Esophagus muscularis mucosa (tissue), 4 donors: ENCODE measurements at regions of chr2 and their contacts with region 1.

Region 1: DNA sequence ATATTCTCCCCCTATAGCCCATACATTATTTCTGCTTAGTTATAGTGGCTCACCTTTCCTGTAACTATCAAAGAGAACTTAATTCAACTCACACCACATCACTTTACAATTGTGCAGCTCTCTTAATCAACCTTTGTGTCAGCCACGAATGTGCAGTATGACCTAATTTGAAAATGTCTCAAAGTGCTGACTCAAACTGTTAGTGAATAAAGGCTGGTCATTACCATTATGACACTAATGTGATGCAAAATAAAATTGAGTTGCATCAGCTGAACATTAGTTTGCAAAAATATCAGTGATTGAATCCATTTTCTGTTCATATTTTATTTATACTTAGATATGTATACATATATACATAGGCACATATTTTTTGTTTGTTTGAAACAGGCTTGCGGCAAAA is 251.8 kb downstream of the MEIS1 start:
- DNase-seq: no peak
- H3K4me3 ChIP-seq: no peak overlapping the region
- H3K27ac ChIP-seq: peak overlapping the region; percentile 78 to 85 (median 84)
- H3K4me1 ChIP-seq: peaks cover 0 to 37% (median 19%) of the 10 kb centered on the region in 4 donors
- H3K27me3 ChIP-seq: no peaks in the 10 kb centered on the region
- CTCF ChIP-seq: no peak
- EP300 ChIP-seq: no peak
- POLR2A ChIP-seq: no peak

Region 2: GRCh38 chr2:66596256-66596655 is 90.5 kb before region 1 on chr2:
- intact Hi-C with region 1: loop called (anchors 5 kb)
- DNase-seq: no peak
- H3K4me3 ChIP-seq: no peak overlapping the region
- H3K27ac ChIP-seq: peak overlapping the region; percentile 4 to 62 (median 26)
- H3K4me1 ChIP-seq: peaks cover 0 to 22% (median 12%) of the 10 kb centered on the region in 4 donors
- H3K27me3 ChIP-seq: no peaks in the 10 kb centered on the region
- CTCF ChIP-seq: no peak
- EP300 ChIP-seq: no peak
- POLR2A ChIP-seq: no peak

Region 3: DNA sequence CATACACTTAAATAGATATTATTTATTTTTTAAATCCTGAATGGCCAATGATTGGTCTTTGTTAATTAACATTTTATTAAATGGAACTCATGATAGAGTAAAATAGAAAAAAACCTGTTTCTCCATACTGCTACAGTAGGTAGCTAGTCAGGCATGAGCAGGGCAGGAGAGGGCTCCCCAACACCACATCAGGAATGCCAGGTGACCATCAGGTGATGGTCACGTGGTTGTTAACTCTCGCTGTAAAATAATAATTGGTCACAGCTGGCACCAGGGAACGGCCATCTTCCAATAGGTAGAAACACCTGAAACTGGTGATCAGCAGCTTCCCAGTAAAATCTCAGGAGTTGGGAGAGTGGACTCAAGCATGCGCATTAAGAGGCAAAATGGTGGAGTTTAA is 79.6 kb before region 1 on chr2:
- intact Hi-C with region 1: loop called (anchors 5 kb)
- DNase-seq: no peak
- H3K4me3 ChIP-seq: no peak overlapping the region
- H3K27ac ChIP-seq: no peak overlapping the region
- H3K4me1 ChIP-seq: peaks cover 0 to 10% (median 0%) of the 10 kb centered on the region in 4 donors
- H3K27me3 ChIP-seq: no peaks in the 10 kb centered on the region
- CTCF ChIP-seq: no peak
- EP300 ChIP-seq: no peak
- POLR2A ChIP-seq: no peak

Region 4: DNA sequence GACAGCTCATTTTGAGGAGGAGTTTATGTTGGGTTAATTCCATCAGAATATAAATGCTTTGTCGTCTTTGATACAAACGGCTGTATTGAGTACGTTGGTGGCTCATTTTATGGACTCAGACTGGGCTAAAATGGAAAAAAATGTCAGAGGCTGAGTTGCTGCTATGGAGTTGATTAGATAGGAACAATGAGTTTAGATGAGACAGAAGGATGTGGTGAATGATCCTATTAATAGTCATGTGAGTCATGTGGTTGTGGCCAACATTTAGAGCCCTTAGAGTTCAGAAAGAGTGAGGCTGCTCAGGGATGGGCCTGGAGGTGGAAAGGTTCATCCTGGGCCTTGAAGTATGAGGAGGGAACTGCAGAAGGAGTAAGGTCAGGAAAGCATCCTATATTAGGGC is 182.3 kb after region 1 on chr2:
- intact Hi-C with region 1: no loop called
- DNase-seq: no peak
- H3K4me3 ChIP-seq: no peak overlapping the region
- H3K27ac ChIP-seq: no peak overlapping the region
- H3K4me1 ChIP-seq: peaks cover 0 to 52% (median 47%) of the 10 kb centered on the region in 4 donors
- H3K27me3 ChIP-seq: no peaks in the 10 kb centered on the region
- CTCF ChIP-seq: no peak
- EP300 ChIP-seq: no peak
- POLR2A ChIP-seq: no peak